Right ventricle myocardium inferior (tissue), 1 donor: ENCODE measurements at regions of chr3 and their contacts with region 1.

Region 1: DNA sequence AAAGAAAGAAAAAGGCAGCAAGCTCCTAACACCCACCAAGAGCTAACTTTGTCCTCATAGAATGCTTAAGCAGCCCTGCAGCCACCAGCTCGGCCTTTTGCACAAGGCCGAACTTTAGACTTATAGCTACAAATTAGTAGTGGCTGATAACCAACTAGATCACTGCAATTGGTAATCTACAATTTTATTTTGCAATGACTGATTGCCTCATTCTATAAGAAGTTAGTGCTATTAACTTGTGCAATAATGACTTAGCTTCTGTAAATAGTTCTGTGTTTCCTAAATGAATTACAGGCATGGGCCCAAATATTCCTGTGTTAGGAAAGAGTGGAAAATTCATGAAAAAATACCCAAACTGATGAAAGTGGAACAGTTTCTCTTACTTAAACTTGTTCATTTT is 284.8 kb upstream of the CFAP20DC start:
- DNase-seq: no peak
- ATAC-seq: no peak

Region 2: DNA sequence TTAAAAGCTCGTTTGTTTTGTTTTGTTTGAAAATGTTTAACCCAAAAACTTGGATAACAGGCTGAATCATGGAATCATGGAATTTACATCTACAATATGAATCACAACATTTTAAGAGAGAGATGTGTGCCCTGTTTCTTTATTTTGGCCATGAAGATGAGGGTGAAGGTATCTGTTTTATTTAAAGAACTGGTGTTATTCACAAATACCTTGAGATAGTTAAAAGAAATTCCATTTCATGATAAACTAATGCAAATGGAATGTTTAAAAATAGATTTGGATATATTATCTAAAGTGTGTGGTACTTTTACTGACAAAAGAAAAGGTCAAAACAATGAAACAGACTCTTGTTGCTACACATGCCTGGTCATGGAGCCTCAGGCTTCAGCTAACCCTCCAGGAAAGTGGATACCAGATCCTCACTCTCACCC is 201.2 kb after region 1 on chr3:
- intact Hi-C with region 1: loop called (anchors 10 kb)
- DNase-seq: no peak
- ATAC-seq: no peak

Region 3: GRCh38 chr3:59675495-59675894 is 340.9 kb after region 1 on chr3:
- intact Hi-C with region 1: no loop called
- DNase-seq: no peak
- ATAC-seq: no peak